CD8-positive, alpha-beta memory T cell (primary cell): ENCODE measurements at regions of chr4 and their contacts with region 1.

Region 1: DNA sequence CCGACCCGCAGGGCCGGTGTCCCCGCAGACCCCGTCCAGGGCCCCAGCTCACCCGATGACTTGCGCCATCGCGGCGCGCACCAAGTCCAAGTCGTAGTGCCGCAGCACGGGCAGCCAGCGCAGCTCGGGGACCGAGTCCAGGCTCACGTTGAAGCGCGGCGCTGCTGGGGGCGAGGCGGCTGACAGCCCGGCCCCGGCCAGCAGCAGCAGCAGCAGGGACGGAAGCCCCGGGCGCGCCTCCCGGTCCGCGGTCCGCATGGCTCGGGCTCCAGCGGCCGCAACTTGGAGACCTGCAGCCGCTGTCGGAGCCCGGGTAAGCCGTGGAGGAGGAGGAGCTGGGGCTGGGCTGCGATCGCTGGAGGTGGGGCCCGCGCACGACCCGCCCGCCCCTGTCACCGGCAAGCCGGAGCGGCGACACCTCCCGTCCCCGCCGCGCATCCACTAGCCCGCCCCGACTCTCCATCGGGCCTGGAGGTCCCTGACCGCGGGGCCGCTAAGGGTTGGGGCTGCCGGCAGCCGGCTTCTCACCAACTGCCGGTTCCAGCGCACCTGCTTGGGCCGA is at the start of gene NAAA:
- DNase-seq: peak; percentile 67 to 86 (median 78)
- H3K4me3 ChIP-seq: peak within 1 kb of the TSS; percentile 99
- H3K4me3 Mint-ChIP-seq: peak within 1 kb of the TSS; percentile 95 to 99 (median 99)
- H3K27ac ChIP-seq: peak within 1 kb of the TSS; percentile 94
- H3K27ac Mint-ChIP-seq: peak within 1 kb of the TSS; percentile 92 to 98 (median 96)
- H3K4me1 ChIP-seq: peaks cover 7% of the 10 kb centered on the region
- H3K4me1 Mint-ChIP-seq: peaks cover 14 to 32% (median 23%) of the 10 kb centered on the region in 3 donors
- H3K27me3 ChIP-seq: no peaks in the 10 kb centered on the region
- H3K27me3 Mint-ChIP-seq: no peaks in the 10 kb centered on the region
- total RNA-seq, gene NAAA: 47.9 to 51.5 TPM

Region 2: DNA sequence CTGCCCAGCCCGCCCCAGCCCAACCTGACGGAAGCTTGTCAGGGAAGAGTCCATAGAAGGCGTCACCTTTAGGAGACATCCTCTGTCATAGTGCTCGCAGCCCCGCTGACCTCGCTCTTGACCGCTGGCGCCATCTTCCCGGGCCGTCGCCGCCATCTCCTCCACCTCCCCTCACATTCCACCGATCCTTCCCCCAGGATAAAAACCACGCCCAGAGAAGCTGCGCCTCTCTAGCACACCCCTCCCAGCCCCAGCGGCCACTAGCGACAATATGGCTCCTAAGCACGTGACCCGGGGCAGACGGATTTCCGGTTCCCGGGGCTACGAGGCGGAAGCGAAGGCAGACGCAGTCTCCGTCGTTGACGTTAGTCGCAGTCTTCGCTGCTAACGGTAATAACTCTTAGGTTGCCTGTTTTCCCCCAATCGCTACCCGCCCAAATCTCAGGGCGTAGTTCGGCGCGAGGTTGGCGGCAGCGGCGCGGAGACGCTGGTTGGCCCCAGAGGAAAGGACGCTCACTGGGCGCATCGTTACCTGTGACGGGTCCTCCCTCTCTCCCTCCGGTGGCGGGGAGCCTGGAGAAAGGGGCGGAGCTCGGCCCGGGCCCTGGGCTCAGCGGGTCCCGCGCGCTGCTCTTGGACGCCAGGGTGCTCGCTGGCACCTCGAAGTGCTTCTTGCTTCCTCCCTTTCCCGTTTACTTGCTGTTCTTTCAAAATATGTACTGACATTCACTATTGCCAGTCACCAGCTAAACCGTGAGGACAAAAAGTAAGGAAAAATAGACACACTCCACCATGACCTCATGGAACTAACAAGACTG is 426.4 kb before region 1 on chr4 and contains the starts of genes RCHY1 and THAP6:
- CTCF ChIA-PET with region 1: no interaction called
- POLR2A ChIA-PET with region 1: interaction called, 15 read pairs
- DNase-seq: peak; percentile 91 to 95 (median 94)
- H3K4me3 ChIP-seq: peak within 1 kb of the TSS; percentile 92
- H3K4me3 Mint-ChIP-seq: no peak within 1 kb of the TSS
- H3K27ac ChIP-seq: peak within 1 kb of the TSS; percentile 91
- H3K27ac Mint-ChIP-seq: peak within 1 kb of the TSS in 2 of 8 donors; percentile 98 to 100
- H3K4me1 ChIP-seq: peaks cover 68% of the 10 kb centered on the region
- H3K4me1 Mint-ChIP-seq: peaks cover 44 to 51% (median 49%) of the 10 kb centered on the region in 3 donors
- H3K27me3 ChIP-seq: no peaks in the 10 kb centered on the region
- H3K27me3 Mint-ChIP-seq: peaks cover 0 to 1% of the 10 kb centered on the region in 2 donors
- total RNA-seq, gene RCHY1: 27.9 to 31.7 TPM
- total RNA-seq, gene THAP6: 22.7 to 23.2 TPM

Region 3: GRCh38 chr4:75675004-75675531 is 265.7 kb before region 1 on chr4:
- CTCF ChIA-PET with region 1: no interaction called
- POLR2A ChIA-PET with region 1: no interaction called
- DNase-seq: no peak
- H3K4me3 ChIP-seq: no peak overlapping the region
- H3K4me3 Mint-ChIP-seq: peak overlapping the region in 1 of 7 donors; percentile 34
- H3K27ac ChIP-seq: no peak overlapping the region
- H3K27ac Mint-ChIP-seq: peak overlapping the region in 4 of 8 donors; percentile 32 to 57 (median 42)
- H3K4me1 ChIP-seq: peaks cover 28% of the 10 kb centered on the region
- H3K4me1 Mint-ChIP-seq: peaks cover 27 to 32% (median 32%) of the 10 kb centered on the region in 3 donors
- H3K27me3 ChIP-seq: no peaks in the 10 kb centered on the region
- H3K27me3 Mint-ChIP-seq: peaks cover 0 to 3% of the 10 kb centered on the region in 2 donors

Region 4: DNA sequence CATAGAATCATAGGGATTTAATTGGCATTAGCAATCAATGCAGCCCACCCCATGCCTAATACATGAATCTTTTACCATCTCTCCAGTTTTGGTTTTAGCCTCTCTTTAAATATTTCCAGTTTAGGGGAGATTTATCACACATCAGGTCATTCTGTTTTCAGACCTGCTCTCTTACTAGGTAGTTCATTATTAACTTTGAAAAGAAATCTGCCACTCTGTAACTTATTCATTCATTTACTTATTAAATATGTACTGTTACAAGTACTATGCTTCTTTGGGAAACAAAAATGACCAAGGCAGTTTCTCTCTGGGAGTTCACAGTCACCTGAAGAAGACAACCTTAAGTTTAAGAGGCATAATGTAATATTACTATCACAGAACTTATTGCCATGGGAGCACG is 154.2 kb before region 1 on chr4:
- CTCF ChIA-PET with region 1: no interaction called
- POLR2A ChIA-PET with region 1: no interaction called
- DNase-seq: no peak
- H3K4me3 ChIP-seq: no peak overlapping the region
- H3K4me3 Mint-ChIP-seq: no peak overlapping the region
- H3K27ac ChIP-seq: no peak overlapping the region
- H3K27ac Mint-ChIP-seq: peak overlapping the region in 4 of 8 donors; percentile 2 to 92 (median 30)
- H3K4me1 ChIP-seq: no peaks in the 10 kb centered on the region
- H3K4me1 Mint-ChIP-seq: peaks cover 0 to 3% (median 1%) of the 10 kb centered on the region in 3 donors
- H3K27me3 ChIP-seq: no peaks in the 10 kb centered on the region
- H3K27me3 Mint-ChIP-seq: no peaks in the 10 kb centered on the region

Region 5: DNA sequence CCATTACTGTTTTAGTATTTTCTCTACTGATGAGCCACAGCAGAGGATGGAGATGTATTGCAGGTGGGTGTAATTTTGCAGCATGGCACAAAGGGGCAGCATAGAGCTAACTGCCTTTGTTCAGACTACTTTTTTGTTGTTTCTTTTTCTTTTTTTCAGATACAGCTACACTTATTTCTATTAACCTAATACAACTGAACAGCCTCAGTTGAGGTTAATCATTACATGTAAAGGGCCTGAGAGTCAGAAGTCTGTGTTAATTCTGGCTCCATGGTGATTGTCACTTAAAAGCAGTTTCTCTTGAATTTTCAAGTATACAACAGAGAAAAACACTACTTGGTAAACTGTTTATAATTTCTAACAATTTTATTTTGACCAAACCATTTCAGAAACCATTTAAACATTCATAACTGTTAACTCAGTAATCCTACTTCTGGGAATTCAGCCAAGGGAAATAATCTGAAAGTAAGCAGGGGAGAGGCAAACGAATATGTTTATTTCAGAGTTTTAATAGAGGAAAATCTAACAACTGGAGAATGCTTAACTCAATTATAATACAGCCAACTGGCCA is 24.6 kb before region 1 on chr4:
- CTCF ChIA-PET with region 1: interaction called, 21 read pairs
- POLR2A ChIA-PET with region 1: no interaction called
- DNase-seq: peak in 3 of 5 donors; percentile 6 to 46 (median 24)
- H3K4me3 ChIP-seq: no peak overlapping the region
- H3K4me3 Mint-ChIP-seq: no peak overlapping the region
- H3K27ac ChIP-seq: no peak overlapping the region
- H3K27ac Mint-ChIP-seq: peak overlapping the region in 1 of 8 donors; percentile 41
- H3K4me1 ChIP-seq: no peaks in the 10 kb centered on the region
- H3K4me1 Mint-ChIP-seq: peaks cover 0 to 6% (median 0%) of the 10 kb centered on the region in 3 donors
- H3K27me3 ChIP-seq: no peaks in the 10 kb centered on the region
- H3K27me3 Mint-ChIP-seq: no peaks in the 10 kb centered on the region

Region 6: GRCh38 chr4:75930152-75930551 is 10.6 kb before region 1 on chr4:
- CTCF ChIA-PET with region 1: interaction called, 12 read pairs
- POLR2A ChIA-PET with region 1: interaction called, 4 read pairs
- DNase-seq: no peak
- H3K4me3 ChIP-seq: no peak overlapping the region
- H3K4me3 Mint-ChIP-seq: no peak overlapping the region
- H3K27ac ChIP-seq: no peak overlapping the region
- H3K27ac Mint-ChIP-seq: no peak overlapping the region
- H3K4me1 ChIP-seq: no peaks in the 10 kb centered on the region
- H3K4me1 Mint-ChIP-seq: peaks cover 2 to 6% (median 3%) of the 10 kb centered on the region in 3 donors
- H3K27me3 ChIP-seq: no peaks in the 10 kb centered on the region
- H3K27me3 Mint-ChIP-seq: no peaks in the 10 kb centered on the region

Region 7: DNA sequence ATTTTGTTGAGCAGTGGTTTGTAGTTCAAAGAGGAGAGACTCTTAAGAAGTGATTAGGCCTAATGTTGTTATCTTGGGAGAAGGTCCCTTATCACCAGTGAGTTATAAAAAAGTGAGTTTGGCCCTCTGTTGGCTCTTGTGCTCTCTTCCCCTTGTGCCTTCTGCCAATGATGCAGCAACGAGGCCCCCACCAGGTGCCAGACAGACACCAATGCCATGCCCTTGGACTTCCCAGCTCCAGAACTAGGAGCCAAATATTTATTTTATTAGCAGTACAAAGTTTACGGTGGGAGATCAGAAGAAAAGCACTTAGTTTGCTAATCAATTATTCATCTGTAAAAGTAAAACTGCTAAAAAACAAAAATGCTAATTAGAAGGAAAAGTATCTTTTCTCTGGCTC is 22.8 kb after region 1 on chr4:
- CTCF ChIA-PET with region 1: no interaction called
- POLR2A ChIA-PET with region 1: no interaction called
- DNase-seq: no peak
- H3K4me3 ChIP-seq: no peak overlapping the region
- H3K4me3 Mint-ChIP-seq: no peak overlapping the region
- H3K27ac ChIP-seq: no peak overlapping the region
- H3K27ac Mint-ChIP-seq: peak overlapping the region in 2 of 8 donors; percentile 17 to 29
- H3K4me1 ChIP-seq: no peaks in the 10 kb centered on the region
- H3K4me1 Mint-ChIP-seq: no peaks in the 10 kb centered on the region
- H3K27me3 ChIP-seq: no peaks in the 10 kb centered on the region
- H3K27me3 Mint-ChIP-seq: no peaks in the 10 kb centered on the region

Region 8: DNA sequence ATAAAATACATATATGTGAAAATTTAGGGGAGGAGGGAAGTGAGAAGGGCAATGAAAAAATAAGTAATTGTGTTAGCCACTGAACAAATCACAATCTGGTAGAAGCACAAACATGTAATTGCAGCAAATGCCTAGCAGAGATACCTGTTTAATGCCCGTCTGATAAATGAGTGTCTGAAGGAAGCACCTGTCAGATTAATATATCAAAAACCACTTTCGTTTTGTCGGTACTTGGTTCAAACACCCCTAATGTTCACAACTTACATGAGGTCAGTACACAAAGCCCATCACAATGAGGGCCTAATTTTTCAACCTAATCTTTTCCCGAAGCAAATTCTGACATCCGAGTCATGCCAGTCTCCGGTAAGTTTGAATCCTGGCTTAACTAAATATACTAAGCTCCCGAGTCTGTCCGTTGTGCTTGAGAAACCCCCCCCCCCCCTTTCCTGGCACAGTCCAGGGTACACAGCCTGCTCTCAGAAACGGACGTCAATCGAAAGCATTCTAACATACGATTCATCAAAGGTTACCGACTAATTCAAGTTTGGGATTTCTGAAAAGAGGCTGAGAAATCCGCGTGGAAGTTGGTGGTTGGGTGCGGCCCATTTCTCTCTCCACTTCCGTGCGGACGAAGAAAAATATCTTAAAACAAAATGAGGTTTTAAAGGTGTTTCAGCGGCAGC is 49.2 kb after region 1 on chr4:
- CTCF ChIA-PET with region 1: interaction called, 8 read pairs
- POLR2A ChIA-PET with region 1: interaction called, 14 read pairs
- DNase-seq: peak in 1 of 5 donors; percentile 10
- H3K4me3 ChIP-seq: peak overlapping the region; percentile 77
- H3K4me3 Mint-ChIP-seq: peak overlapping the region; percentile 94 to 99 (median 97)
- H3K27ac ChIP-seq: peak overlapping the region; percentile 55
- H3K27ac Mint-ChIP-seq: peak overlapping the region; percentile 78 to 100 (median 93)
- H3K4me1 ChIP-seq: peaks cover 46% of the 10 kb centered on the region
- H3K4me1 Mint-ChIP-seq: peaks cover 30 to 37% (median 34%) of the 10 kb centered on the region in 3 donors
- H3K27me3 ChIP-seq: no peaks in the 10 kb centered on the region
- H3K27me3 Mint-ChIP-seq: peaks cover 1 to 6% of the 10 kb centered on the region in 2 donors